CD8-positive, alpha-beta T cell (primary cell): ENCODE measurements at regions of chr9 and their contacts with region 1.

Region 1: GRCh38 chr9:5593904-5594303 is 35.0 kb upstream of the RIC1 start:
- DNase-seq: peak in 1 of 9 experiments; percentile 17
- ATAC-seq: no peak
- H3K4me3 ChIP-seq: no peak overlapping the region
- H3K4me3 Mint-ChIP-seq: no peak overlapping the region
- H3K27ac ChIP-seq: no peak overlapping the region
- H3K27ac Mint-ChIP-seq: no peak overlapping the region
- H3K4me1 ChIP-seq: no peaks in the 10 kb centered on the region
- H3K4me1 Mint-ChIP-seq: peaks cover 6% of the 10 kb centered on the region
- H3K27me3 ChIP-seq: no peaks in the 10 kb centered on the region
- H3K27me3 Mint-ChIP-seq: no peaks in the 10 kb centered on the region
- CTCF ChIP-seq: no peak

Region 2: DNA sequence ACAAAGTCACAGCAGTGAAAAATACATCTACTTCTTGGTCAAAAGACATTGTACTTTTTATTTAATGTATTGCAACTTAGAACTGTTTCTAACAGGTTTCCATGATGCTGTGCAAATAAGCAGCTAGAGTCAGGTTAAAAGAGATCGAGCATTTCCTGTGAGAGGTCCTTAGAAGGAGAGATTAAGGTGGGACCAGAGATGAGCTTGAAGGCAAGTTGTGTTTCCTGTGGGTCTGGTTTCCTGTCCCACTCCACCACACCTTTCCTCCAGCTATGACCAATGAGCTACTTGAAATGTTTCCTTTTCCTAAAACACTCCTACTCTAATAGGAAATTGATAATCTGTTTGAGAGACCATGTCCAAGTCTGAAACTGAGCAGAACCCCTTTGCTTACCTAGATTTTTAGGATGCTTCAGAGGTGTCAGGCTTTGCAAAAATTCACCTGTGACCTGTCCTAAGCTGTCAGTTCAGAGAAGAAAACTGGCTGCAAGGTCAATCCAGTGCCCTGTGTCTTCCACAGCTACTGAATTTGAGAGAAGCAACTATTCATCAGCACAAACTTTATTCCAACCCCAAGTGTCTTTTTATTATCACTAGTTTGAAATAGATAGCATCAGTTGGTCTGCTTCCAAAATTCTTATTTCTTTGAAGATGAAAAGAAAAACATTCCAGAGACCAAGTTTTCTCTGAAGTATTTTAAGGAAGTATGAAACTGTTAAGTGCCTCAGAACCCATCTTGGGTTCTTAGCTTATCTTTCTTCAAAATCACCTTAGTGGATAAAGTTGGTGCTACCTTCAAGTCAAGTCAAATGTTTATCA is 241.1 kb before region 1 on chr9:
- CTCF ChIA-PET with region 1: no interaction called
- POLR2A ChIA-PET with region 1: no interaction called
- intact Hi-C with region 1: loop called in 1 of 2 experiments (anchors 10 kb)
- DNase-seq: peak in 5 of 9 experiments; percentile 7 to 60 (median 31)
- ATAC-seq: peak; percentile 69
- H3K4me3 ChIP-seq: peak overlapping the region in 1 of 2 experiments; percentile 11
- H3K4me3 Mint-ChIP-seq: peak overlapping the region; percentile 56
- H3K27ac ChIP-seq: peak overlapping the region in 1 of 2 experiments; percentile 44
- H3K27ac Mint-ChIP-seq: peak overlapping the region; percentile 72
- H3K4me1 ChIP-seq: peaks cover 38% of the 10 kb centered on the region
- H3K4me1 Mint-ChIP-seq: peaks cover 44% of the 10 kb centered on the region
- H3K27me3 ChIP-seq: no peaks in the 10 kb centered on the region
- H3K27me3 Mint-ChIP-seq: no peaks in the 10 kb centered on the region
- CTCF ChIP-seq: no peak

Region 3: DNA sequence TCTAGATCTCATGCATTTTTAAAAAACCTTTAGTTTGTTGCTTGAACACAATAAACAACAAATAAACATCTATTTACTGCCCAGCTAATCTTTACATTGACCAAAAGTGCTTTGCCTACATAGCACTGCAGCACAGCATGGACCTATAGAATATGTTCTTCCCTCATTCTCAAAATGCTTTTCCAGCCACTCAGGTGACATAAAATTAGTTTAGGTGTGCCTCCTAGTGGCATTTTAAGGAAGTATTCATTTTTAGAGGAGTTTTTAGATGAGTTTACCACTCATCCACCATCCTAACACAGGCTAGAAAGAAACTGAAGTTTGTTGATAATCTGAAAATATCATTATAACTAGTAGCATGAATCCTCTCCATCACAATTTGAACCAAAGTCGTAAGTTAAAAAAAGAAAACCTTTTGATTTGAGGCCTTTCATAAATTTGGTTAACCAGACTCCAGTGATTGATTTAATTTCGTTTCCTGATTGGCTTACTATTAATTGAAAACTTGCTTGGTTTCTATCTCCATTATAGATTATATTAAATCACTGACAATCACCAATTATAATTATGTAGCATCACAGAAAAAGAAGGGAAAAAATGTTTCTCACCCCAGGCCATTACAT is 168.8 kb before region 1 on chr9:
- CTCF ChIA-PET with region 1: interaction called, 6 read pairs
- POLR2A ChIA-PET with region 1: interaction called, 3 read pairs
- intact Hi-C with region 1: loop called (anchors 1 to 5 kb)
- DNase-seq: peak in 2 of 9 experiments; percentile 56 to 65
- ATAC-seq: peak; percentile 59
- H3K4me3 ChIP-seq: no peak overlapping the region
- H3K4me3 Mint-ChIP-seq: no peak overlapping the region
- H3K27ac ChIP-seq: no peak overlapping the region
- H3K27ac Mint-ChIP-seq: no peak overlapping the region
- H3K4me1 ChIP-seq: no peaks in the 10 kb centered on the region
- H3K4me1 Mint-ChIP-seq: peaks cover 9% of the 10 kb centered on the region
- H3K27me3 ChIP-seq: no peaks in the 10 kb centered on the region
- H3K27me3 Mint-ChIP-seq: no peaks in the 10 kb centered on the region
- CTCF ChIP-seq: peak; percentile 88

Region 4: DNA sequence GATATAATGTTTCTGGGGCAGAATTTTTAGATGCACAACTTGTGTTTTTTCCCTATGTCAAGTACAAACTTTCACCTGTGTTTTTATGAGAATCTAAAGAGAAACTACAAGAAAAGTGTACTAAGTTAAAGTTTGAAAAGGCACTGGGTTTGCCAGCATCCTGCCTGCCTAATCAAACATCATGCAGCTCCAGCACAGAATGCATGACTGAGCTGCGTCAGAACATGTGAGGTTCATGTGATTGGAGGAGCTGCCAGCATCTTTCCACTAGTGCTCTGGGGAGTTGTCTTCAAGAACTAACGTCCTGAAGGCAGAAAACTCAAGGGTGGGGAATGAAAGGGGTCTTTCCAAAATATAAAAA is 11.1 kb before region 1 on chr9:
- CTCF ChIA-PET with region 1: interaction called, 26 read pairs
- POLR2A ChIA-PET with region 1: no interaction called
- intact Hi-C with region 1: no loop called
- DNase-seq: peak in 6 of 9 experiments; percentile 4 to 62 (median 40)
- ATAC-seq: peak; percentile 85
- H3K4me3 ChIP-seq: no peak overlapping the region
- H3K4me3 Mint-ChIP-seq: no peak overlapping the region
- H3K27ac ChIP-seq: no peak overlapping the region
- H3K27ac Mint-ChIP-seq: peak overlapping the region; percentile 46
- H3K4me1 ChIP-seq: peaks cover 31% of the 10 kb centered on the region
- H3K4me1 Mint-ChIP-seq: peaks cover 45% of the 10 kb centered on the region
- H3K27me3 ChIP-seq: no peaks in the 10 kb centered on the region
- H3K27me3 Mint-ChIP-seq: no peaks in the 10 kb centered on the region
- CTCF ChIP-seq: no peak

Region 5: GRCh38 chr9:5608298-5609225 is 14.7 kb after region 1 on chr9:
- CTCF ChIA-PET with region 1: interaction called, 20 read pairs
- POLR2A ChIA-PET with region 1: no interaction called
- intact Hi-C with region 1: no loop called
- DNase-seq: peak in 1 of 9 experiments; percentile 25
- ATAC-seq: peak; percentile 63
- H3K4me3 ChIP-seq: peak overlapping the region; percentile 17 to 20
- H3K4me3 Mint-ChIP-seq: peak overlapping the region; percentile 82
- H3K27ac ChIP-seq: no peak overlapping the region
- H3K27ac Mint-ChIP-seq: peak overlapping the region; percentile 83
- H3K4me1 ChIP-seq: peaks cover 6% of the 10 kb centered on the region
- H3K4me1 Mint-ChIP-seq: peaks cover 36% of the 10 kb centered on the region
- H3K27me3 ChIP-seq: no peaks in the 10 kb centered on the region
- H3K27me3 Mint-ChIP-seq: no peaks in the 10 kb centered on the region
- CTCF ChIP-seq: no peak